ENCODE measurements at regions of chr1 and their contacts with region 1.

Region 1: DNA sequence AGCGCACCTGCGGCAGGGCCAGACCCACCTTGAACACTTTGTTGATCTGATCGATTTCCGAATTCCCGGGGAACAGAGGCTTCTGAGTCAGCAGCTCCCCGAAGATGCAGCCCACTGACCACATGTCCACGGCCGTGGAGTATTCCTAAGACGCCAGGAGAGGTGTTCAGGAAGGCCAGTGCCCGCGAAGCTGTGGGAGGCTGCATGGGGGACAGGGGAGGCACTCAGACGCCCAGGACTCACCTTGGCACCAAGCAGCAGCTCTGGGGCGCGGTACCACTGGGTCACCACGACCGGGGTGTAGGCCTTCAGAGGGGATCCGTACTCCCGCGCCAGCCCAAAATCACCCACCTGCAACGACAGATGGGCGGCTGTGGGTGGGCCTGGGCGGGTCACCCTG is 11.2 kb upstream of the SLC35E2B start:
- DNase-seq: peak in 1 of 14 experiments; percentile 33
- ATAC-seq: no peak
- H3K4me3 ChIP-seq: no peak overlapping the region
- H3K4me3 Mint-ChIP-seq: no peak overlapping the region
- H3K27ac ChIP-seq: no peak overlapping the region
- H3K27ac Mint-ChIP-seq: no peak overlapping the region
- H3K4me1 ChIP-seq: no peaks in the 10 kb centered on the region
- H3K4me1 Mint-ChIP-seq: no peaks in the 10 kb centered on the region
- H3K27me3 ChIP-seq: no peaks in the 10 kb centered on the region
- H3K27me3 Mint-ChIP-seq: no peaks in the 10 kb centered on the region
- CTCF ChIP-seq: no peak

Region 2: GRCh38 chr1:1730870-1731269 is 27.1 kb after region 1 on chr1:
- CTCF ChIA-PET with region 1: no interaction called
- POLR2A ChIA-PET with region 1: no interaction called
- intact Hi-C with region 1: no loop called
- DNase-seq: peak in 1 of 14 experiments; percentile 26
- ATAC-seq: no peak
- H3K4me3 ChIP-seq: no peak overlapping the region
- H3K4me3 Mint-ChIP-seq: no peak overlapping the region
- H3K27ac ChIP-seq: peak overlapping the region in 1 of 2 donors; percentile 22
- H3K27ac Mint-ChIP-seq: no peak overlapping the region
- H3K4me1 ChIP-seq: peaks cover 32% of the 10 kb centered on the region
- H3K4me1 Mint-ChIP-seq: peaks cover 9% of the 10 kb centered on the region
- H3K27me3 ChIP-seq: no peaks in the 10 kb centered on the region
- H3K27me3 Mint-ChIP-seq: no peaks in the 10 kb centered on the region
- CTCF ChIP-seq: no peak

Region 3: DNA sequence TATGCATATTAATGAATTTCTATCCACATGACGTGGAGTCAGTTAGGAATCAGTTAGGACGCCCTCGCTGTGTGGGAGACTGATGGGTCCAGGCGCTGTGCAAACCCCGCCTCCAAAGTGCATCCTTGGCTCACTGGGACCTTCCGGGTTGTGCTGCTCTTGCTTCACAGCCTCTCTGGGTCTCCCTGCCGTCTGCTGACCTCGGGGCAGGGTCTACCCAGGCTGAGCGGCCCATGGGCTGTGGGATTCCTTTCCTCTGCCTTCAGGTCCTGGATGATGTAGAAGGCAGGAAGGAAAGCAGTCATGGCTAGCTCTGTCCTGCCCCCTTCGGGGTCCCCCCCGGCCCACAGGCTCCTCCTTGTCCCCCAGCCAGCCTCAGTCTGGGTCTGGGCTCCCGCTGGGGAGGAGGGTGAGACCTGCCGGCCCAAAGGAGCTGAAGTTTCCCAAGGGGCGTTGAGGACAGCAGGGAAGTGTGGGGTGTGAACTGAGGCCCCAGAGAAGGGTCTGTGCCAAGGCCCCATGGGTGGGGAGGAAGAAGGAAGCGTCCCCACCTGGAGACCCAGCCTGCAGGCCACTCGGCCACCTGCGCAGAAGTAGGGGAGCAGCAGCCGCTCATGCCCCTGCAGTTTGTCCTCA is 45.0 kb after region 1 on chr1:
- CTCF ChIA-PET with region 1: no interaction called
- POLR2A ChIA-PET with region 1: no interaction called
- intact Hi-C with region 1: loop called in 1 of 2 experiments (anchors 10 kb)
- DNase-seq: peak in 1 of 14 experiments; percentile 35
- ATAC-seq: no peak
- H3K4me3 ChIP-seq: no peak overlapping the region
- H3K4me3 Mint-ChIP-seq: peak overlapping the region; percentile 23
- H3K27ac ChIP-seq: no peak overlapping the region
- H3K27ac Mint-ChIP-seq: peak overlapping the region; percentile 44
- H3K4me1 ChIP-seq: no peaks in the 10 kb centered on the region
- H3K4me1 Mint-ChIP-seq: no peaks in the 10 kb centered on the region
- H3K27me3 ChIP-seq: no peaks in the 10 kb centered on the region
- H3K27me3 Mint-ChIP-seq: no peaks in the 10 kb centered on the region
- CTCF ChIP-seq: no peak